K562 (cell line): ENCODE measurements at regions of chr2 and their contacts with region 1.

Region 1: DNA sequence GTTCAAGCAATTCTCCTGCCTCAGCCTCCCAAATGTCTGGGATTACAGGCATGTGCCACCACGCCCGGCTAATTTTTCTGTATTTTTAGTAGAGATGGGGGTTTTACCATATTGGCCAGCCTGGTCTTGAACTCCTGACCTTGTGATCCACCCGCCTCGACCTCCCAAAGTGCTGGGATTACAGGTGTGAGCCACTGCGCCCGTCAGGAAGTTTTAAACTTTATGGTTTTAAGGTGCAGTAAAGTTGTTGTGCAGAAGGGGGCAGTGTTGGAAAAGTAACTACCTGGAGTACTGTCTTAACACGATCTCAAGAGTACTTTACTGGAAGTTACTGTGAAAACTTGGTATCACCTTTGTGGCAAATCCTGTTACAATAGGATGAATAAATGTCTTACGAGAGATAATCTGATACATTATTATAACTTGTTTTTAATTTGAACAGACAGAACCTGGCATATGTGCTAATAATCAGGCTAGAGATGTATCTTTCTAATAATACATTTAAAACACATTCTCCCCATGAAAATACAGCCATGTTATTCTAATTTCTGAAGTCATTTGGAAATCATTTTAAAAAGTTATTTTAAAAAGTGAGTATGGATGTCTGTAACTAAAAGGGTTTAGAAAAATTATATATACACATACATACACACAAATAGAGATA is 10.8 kb downstream of the SPDYA start:
- DNase-seq: peak; percentile 36 to 74 (median 44)
- ATAC-seq: peak; percentile 94
- H3K4me3 ChIP-seq: no peak overlapping the region
- H3K27ac ChIP-seq: no peak overlapping the region
- H3K4me1 ChIP-seq: no peaks in the 10 kb centered on the region
- H3K27me3 ChIP-seq: no peaks in the 10 kb centered on the region; a peak in 1 of 5 replicates
- CTCF ChIP-seq: peak; percentile 69 to 84 (median 69)
- EP300 ChIP-seq: no peak
- POLR2A ChIP-seq: no peak
- RAD21 ChIP-seq: peak; percentile 73 to 89

Region 2: GRCh38 chr2:28566521-28567041 is 254.8 kb before region 1 on chr2:
- CTCF ChIA-PET with region 1: no interaction called
- POLR2A ChIA-PET with region 1: no interaction called
- in situ Hi-C with region 1: no loop called
- intact Hi-C with region 1: loop called (anchors 5 kb)
- DNase-seq: peak; percentile 87 to 97 (median 96)
- ATAC-seq: peak; percentile 99
- H3K4me3 ChIP-seq: peak overlapping the region; percentile 42
- H3K27ac ChIP-seq: no peak overlapping the region
- H3K4me1 ChIP-seq: peaks cover 0 to 7% of the 10 kb centered on the region in 2 experiments; a peak in 3 of 5 replicates
- H3K27me3 ChIP-seq: peaks cover 5 to 14% of the 10 kb centered on the region in 2 experiments; a peak in 4 of 5 replicates
- CTCF ChIP-seq: peak; percentile 93 to 100 (median 100)
- EP300 ChIP-seq: no peak
- POLR2A ChIP-seq: no peak
- RAD21 ChIP-seq: peak; percentile 95 to 96

Region 3: GRCh38 chr2:28952816-28953211 is 131.4 kb after region 1 on chr2:
- CTCF ChIA-PET with region 1: interaction called, 18 read pairs
- POLR2A ChIA-PET with region 1: interaction called, 6 read pairs
- in situ Hi-C with region 1: loop called (anchors 5 kb)
- intact Hi-C with region 1: loop called (anchors 1 kb)
- DNase-seq: peak in 2 of 4 experiments; percentile 23 to 39
- ATAC-seq: peak; percentile 64
- H3K4me3 ChIP-seq: no peak overlapping the region
- H3K27ac ChIP-seq: no peak overlapping the region
- H3K4me1 ChIP-seq: peaks cover 6 to 10% of the 10 kb centered on the region in 2 experiments; a peak in 4 of 5 replicates
- H3K27me3 ChIP-seq: no peaks in the 10 kb centered on the region
- CTCF ChIP-seq: peak; percentile 39 to 65 (median 53)
- EP300 ChIP-seq: peak; percentile 7; the same call in 1 of the 2 replicates
- POLR2A ChIP-seq: no peak
- RAD21 ChIP-seq: peak; percentile 45 to 60; a peak in 3 of 4 replicates

Region 4: GRCh38 chr2:29196792-29197788 is 375.7 kb after region 1 on chr2:
- CTCF ChIA-PET with region 1: interaction called, 13 read pairs
- POLR2A ChIA-PET with region 1: no interaction called
- in situ Hi-C with region 1: no loop called
- intact Hi-C with region 1: loop called (anchors 2 kb)
- DNase-seq: peak; percentile 76 to 79 (median 77)
- ATAC-seq: peak; percentile 98
- H3K4me3 ChIP-seq: no peak overlapping the region
- H3K27ac ChIP-seq: no peak overlapping the region
- H3K4me1 ChIP-seq: no peaks in the 10 kb centered on the region
- H3K27me3 ChIP-seq: peaks cover 9 to 17% of the 10 kb centered on the region in 2 experiments; a peak in 4 of 5 replicates
- CTCF ChIP-seq: peak; percentile 85 to 89 (median 88)
- EP300 ChIP-seq: no peak
- POLR2A ChIP-seq: no peak
- RAD21 ChIP-seq: peak; percentile 92 to 95